Activated CD4-positive, alpha-beta memory T cell treated with anti-CD3 and anti-CD28 coated beads, Interleukin-2, amount 10 ng/mL, durations not matched to agents 7 days and 5 days (primary cell): ENCODE measurements at regions of chr12 and their contacts with region 1.

Region 1: GRCh38 chr12:50222275-50222795 is 55.2 kb upstream of the CERS5 start:
- DNase-seq: peak; percentile 38
- H3K4me3 Mint-ChIP-seq: no peak overlapping the region
- H3K27ac Mint-ChIP-seq: no peak overlapping the region
- H3K4me1 Mint-ChIP-seq: peaks cover 40% of the 10 kb centered on the region
- H3K27me3 Mint-ChIP-seq: no peaks in the 10 kb centered on the region

Region 2: DNA sequence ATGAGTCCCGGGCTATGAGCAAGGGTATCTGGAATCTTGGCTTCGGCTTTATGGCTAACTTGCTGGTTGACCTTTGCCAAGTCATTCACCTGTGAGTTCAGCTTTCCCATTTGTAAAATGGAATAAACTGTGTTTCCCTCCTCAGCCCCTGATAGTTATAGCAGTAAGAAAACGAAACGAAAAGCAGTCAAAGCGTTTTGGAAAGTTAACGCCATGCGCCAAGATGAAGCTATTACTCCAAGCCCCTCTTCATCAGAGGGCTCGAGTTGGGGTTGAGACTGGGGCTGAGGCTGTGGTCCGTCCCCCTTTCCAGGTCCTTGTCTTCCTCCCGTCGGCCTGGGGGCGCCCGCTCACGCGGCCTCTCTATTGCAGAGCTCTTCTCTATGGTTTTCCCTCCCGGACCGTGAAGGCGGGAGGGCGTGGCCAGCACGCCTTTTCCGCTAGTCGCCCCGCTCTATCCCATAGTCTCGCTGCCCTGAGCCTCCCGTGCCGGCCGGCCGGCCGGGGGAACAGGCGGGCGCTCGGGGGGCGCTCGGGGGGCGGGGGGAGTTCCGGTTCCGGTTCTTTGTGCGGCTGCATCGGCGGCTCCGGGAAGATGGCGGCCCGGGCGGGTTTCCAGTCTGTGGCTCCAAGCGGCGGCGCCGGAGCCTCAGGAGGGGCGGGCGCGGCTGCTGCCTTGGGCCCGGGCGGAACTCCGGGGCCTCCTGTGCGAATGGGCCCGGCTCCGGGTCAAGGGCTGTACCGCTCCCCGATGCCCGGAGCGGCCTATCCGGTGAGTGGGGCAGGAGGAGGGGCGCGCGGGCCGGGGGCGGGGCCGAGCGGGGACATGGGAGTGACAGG is 137.3 kb before region 1 on chr12 and contains the start of gene SMARCD1:
- CTCF ChIA-PET with region 1: no interaction called
- POLR2A ChIA-PET with region 1: interaction called, 11 read pairs
- DNase-seq: peak; percentile 83
- H3K4me3 Mint-ChIP-seq: peak within 1 kb of the TSS; percentile 88
- H3K27ac Mint-ChIP-seq: peak within 1 kb of the TSS; percentile 88
- H3K4me1 Mint-ChIP-seq: peaks cover 41% of the 10 kb centered on the region
- H3K27me3 Mint-ChIP-seq: no peaks in the 10 kb centered on the region
- total RNA-seq, gene SMARCD1: 57.3 to 63.3 TPM

Region 3: DNA sequence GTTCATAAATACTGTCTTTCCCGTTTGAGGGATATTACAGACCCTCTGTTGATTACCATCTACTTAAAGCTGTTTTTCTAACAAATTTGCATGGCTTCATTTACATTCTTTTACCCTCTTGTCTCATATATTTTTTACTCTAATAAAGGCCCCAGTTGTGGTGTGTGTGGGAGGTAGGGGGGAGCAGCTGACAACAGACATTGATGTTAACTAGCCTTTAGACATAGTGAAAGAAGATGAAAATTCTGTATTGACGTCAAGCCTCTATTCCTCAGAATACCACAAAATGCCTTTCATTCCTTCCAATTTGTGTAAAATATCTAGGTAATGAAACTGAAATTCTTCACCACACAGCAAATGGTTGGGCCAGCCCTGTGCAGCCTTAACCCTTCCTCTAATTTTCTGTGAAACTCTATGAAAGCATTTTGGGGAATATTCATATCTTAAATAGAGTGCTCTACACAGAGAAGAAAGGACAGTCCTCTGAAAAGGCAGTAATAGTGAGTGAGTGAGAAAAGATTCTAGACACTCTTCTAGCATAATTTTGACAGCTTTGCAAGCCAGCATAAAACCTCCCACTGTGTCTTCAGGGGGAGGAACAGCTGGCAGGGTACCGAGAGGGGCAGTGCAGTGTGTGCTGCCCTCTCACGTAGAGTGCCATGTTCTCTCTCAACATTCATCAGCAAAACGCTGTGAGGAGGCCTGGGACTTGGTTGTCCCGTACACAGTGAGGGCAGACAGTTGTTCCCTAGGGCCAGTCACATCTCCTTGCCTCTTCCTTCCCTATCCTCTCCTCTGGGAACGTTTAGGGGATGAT is 35.0 kb before region 1 on chr12:
- CTCF ChIA-PET with region 1: interaction called, 9 read pairs
- POLR2A ChIA-PET with region 1: interaction called, 21 read pairs
- DNase-seq: peak; percentile 33
- H3K4me3 Mint-ChIP-seq: no peak overlapping the region
- H3K27ac Mint-ChIP-seq: peak overlapping the region; percentile 82
- H3K4me1 Mint-ChIP-seq: peaks cover 63% of the 10 kb centered on the region
- H3K27me3 Mint-ChIP-seq: no peaks in the 10 kb centered on the region

Region 4: GRCh38 chr12:50211392-50212070 is 10.8 kb before region 1 on chr12:
- CTCF ChIA-PET with region 1: interaction called, 17 read pairs
- POLR2A ChIA-PET with region 1: interaction called, 48 read pairs
- DNase-seq: no peak
- H3K4me3 Mint-ChIP-seq: peak overlapping the region; percentile 38
- H3K27ac Mint-ChIP-seq: peak overlapping the region; percentile 87
- H3K4me1 Mint-ChIP-seq: peaks cover 51% of the 10 kb centered on the region
- H3K27me3 Mint-ChIP-seq: no peaks in the 10 kb centered on the region

Region 5: GRCh38 chr12:50252977-50253602 is 30.8 kb after region 1 on chr12:
- CTCF ChIA-PET with region 1: interaction called, 4 read pairs
- POLR2A ChIA-PET with region 1: interaction called, 21 read pairs
- DNase-seq: no peak
- H3K4me3 Mint-ChIP-seq: no peak overlapping the region
- H3K27ac Mint-ChIP-seq: no peak overlapping the region
- H3K4me1 Mint-ChIP-seq: peaks cover 62% of the 10 kb centered on the region
- H3K27me3 Mint-ChIP-seq: no peaks in the 10 kb centered on the region

Region 6: DNA sequence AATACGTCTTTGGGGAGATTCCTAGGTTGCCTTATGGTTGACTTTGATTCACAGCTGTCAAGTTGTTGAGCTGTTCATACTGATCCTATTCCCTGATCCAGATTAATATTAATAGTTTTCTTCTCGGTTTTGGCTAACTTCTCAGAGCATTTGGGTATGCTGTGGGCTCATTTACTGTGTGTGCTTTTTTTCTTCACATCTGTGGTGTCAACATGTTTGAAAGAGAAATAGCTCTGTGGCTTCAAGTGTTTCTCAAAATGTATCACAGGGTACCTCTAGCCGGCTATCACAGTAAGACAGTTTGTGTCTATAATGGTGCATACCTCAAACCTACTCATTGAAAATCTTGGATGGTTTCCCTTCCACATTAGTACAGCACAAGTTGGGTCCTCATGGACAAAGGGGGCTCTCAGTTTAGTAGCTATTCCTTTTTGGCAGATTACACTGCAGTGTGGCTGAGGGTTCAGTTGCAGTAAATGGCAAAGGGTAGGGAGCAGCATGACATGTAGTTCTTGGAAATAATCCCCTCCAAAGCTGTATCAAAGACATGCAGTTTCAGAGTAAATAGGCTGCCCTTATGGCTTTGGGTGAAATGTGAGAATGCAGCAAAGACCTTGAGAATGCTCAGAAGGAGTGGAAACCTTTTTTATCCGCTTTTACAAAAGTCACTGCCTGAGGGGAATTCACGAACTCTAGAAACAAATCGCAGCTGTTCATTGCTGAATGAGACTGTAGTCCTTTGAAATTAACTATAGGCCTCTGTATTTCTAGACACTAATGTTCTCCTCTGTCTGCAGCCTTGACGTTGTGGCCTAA is 439.2 kb after region 1 on chr12:
- CTCF ChIA-PET with region 1: no interaction called
- POLR2A ChIA-PET with region 1: no interaction called
- DNase-seq: no peak
- H3K4me3 Mint-ChIP-seq: no peak overlapping the region
- H3K27ac Mint-ChIP-seq: peak overlapping the region; percentile 52
- H3K4me1 Mint-ChIP-seq: no peaks in the 10 kb centered on the region
- H3K27me3 Mint-ChIP-seq: no peaks in the 10 kb centered on the region